SK-N-SH (cell line): ENCODE measurements at regions of chr16 and their contacts with region 1.

Region 1: DNA sequence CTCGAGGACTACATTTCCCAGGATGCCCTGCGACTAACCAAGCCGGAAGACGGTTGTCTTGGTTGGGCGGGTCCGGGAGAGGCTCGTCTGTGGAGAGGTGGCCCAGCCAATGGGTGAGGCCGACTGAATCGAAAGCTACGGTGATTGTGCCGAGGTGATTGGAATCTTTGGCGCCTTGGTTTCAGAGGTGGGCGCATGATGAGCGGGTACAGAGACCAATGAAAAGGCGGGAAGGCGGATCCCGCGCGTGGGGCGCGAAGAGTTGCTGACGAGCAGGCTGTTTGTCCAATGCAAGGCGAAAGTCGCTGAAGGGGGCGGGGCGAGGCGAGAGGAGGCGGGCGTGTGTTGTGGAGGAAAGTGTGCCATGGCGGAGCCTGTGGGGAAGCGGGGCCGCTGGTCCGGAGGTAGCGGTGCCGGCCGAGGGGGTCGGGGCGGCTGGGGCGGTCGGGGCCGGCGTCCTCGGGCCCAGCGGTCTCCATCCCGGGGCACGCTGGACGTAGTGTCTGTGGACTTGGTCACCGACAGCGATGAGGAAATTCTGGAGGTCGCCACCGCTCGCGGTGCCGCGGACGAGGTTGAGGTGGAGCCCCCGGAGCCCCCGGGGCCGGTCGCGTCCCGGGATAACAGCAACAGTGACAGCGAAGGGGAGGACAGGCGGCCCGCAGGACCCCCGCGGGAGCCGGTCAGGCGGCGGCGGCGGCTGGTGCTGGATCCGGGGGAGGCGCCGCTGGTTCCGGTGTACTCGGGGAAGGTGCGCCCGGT is at the start of gene NFATC2IP:
- DNase-seq: peak; percentile 98
- H3K4me3 ChIP-seq: peak within 1 kb of the TSS; percentile 68 to 93
- H3K27ac ChIP-seq: peak within 1 kb of the TSS; percentile 45 to 69; a peak in 3 of 4 replicates
- H3K4me1 ChIP-seq: peaks cover 5 to 8% of the 10 kb centered on the region in 2 experiments; a peak in 1 of 4 replicates
- H3K27me3 ChIP-seq: no peaks in the 10 kb centered on the region
- CTCF ChIP-seq: no peak
- EP300 ChIP-seq: no peak
- RAD21 ChIP-seq: no peak
- polyA plus RNA-seq, gene NFATC2IP: 41.9 and 56.1 TPM in 2 replicates

Region 2: DNA sequence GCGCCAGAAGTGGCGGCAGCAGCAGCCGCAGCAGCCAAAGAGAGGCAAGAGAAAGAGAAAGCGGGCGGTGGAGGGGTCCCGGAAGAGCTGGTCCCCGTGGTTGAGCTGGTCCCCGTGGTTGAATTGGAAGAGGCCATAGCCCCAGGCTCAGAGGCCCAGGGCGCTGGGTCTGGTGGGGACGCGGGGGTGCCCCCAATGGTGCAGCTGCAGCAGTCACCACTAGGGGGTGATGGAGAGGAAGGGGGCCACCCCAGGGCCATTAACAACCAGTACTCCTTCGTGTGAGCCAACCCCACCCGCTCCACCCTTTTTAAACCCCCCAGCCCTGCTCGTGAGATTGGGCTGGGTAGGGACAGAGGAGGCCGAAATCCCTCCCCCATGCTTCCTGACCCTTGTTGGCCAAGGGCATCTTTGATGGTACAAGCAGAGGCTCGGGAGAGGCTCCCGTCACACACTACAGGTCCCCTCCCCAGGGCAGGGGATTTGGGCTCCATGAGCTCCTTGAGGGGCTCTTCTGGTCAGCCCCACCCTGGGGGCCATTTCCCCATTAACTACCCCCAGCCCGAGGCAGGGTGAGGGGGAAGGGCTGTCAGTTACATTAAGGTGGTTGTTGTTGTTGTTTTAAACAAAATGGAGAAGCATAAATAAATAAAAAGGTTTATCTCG is 77.2 kb before region 1 on chr16:
- CTCF ChIA-PET with region 1: interaction called, 15 read pairs
- POLR2A ChIA-PET with region 1: interaction called, 3 read pairs
- DNase-seq: peak; percentile 84
- H3K4me3 ChIP-seq: no peak overlapping the region
- H3K27ac ChIP-seq: no peak overlapping the region
- H3K4me1 ChIP-seq: peaks cover 0 to 3% of the 10 kb centered on the region in 2 experiments; a peak in 1 of 4 replicates
- H3K27me3 ChIP-seq: no peaks in the 10 kb centered on the region
- CTCF ChIP-seq: peak; percentile 67
- EP300 ChIP-seq: no peak
- RAD21 ChIP-seq: no peak

Region 3: DNA sequence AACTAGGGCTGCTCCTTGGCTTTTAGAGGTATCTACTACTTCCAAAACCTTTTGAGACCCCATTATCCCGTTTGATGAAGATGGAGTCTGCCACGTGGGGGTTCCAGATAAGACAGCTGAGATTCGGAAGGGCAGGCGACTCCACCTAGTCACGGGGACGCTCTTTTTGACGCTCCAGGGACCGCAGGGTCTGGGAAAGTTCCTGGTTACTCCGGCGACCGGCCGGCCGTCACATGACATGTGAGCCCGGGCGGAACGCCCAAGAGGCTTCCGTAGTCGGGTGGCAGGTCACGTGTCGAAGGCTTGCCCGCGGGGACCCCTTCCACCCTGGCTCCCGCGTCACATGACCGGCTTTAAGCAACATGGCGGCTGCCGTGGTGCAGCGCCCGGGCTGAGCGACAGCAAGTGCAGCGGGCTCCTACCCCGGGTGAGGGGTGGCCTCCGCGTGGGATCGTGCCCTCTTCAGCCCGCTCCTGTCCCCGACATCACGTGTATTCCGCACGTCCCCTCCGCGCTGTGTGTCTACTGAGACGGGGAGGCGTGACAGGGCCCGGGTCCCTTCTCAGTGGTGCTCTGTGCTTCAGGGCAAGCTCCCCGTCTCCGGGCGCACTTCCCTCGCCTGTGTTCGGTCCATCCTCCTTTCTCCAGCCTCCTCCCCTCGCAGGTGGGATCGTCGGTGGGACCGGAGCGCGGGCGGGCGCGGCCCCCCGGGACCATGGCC is 23.8 kb after region 1 on chr16 and contains the start of gene SPNS1:
- CTCF ChIA-PET with region 1: interaction called, 8 read pairs
- POLR2A ChIA-PET with region 1: interaction called, 10 read pairs
- DNase-seq: peak; percentile 99
- H3K4me3 ChIP-seq: peak within 1 kb of the TSS; percentile 66 to 83
- H3K27ac ChIP-seq: peak within 1 kb of the TSS; percentile 93
- H3K4me1 ChIP-seq: peaks cover 5 to 8% of the 10 kb centered on the region in 2 experiments; a peak in 2 of 4 replicates
- H3K27me3 ChIP-seq: no peaks in the 10 kb centered on the region
- CTCF ChIP-seq: no peak
- EP300 ChIP-seq: 0 out of 4 replicates have a peak, but pooled peaks of 1 of the 2 experiments have one; percentile 22
- RAD21 ChIP-seq: no peak
- polyA plus RNA-seq, gene SPNS1: 24.8 and 41.1 TPM in 2 replicates

Region 4: DNA sequence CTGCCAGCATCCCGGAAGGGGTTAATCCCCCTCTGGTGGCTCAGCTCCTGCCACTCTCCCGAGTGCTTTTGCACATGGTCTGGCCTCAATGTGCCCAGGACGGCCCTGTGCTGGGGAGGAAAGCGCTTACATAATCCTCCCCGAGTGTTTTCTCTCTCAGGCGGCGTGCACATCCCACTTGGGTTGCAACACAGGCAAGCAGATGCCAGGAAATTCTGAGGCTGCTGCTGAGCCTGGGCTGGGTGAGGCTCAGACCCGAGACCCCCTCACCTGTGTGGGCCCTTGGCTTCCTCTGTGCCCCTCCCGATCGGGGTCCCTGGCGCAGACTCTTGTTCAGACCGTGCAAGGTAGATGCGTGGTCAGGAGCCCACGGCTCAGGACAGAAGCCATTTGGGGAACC is 178.7 kb after region 1 on chr16:
- CTCF ChIA-PET with region 1: no interaction called
- POLR2A ChIA-PET with region 1: no interaction called
- DNase-seq: no peak
- H3K4me3 ChIP-seq: no peak overlapping the region
- H3K27ac ChIP-seq: no peak overlapping the region
- H3K4me1 ChIP-seq: peaks cover 0 to 19% of the 10 kb centered on the region in 2 experiments; a peak in 1 of 4 replicates
- H3K27me3 ChIP-seq: no peaks in the 10 kb centered on the region
- CTCF ChIP-seq: no peak
- EP300 ChIP-seq: no peak
- RAD21 ChIP-seq: no peak